Caco-2 (cell line): ENCODE measurements at regions of chr1 and their contacts with region 1.

Region 1: DNA sequence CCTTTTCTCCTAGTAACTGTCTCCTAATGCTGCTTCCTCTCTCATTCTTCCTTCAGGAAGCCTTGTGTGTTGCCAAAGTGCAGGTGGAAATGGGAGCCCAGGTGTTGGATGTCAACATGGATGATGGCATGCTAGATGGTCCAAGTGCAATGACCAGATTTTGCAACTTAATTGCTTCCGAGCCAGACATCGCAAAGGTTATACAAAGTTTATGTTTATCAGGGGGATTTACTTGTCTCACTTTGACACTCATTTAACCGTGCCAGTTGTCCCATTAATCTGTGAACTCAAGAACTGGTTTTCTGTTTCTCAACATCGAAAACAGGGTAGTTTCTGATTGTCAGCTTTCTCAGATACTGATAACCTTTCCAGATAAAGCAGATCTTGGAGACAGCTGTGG is 40.4 kb downstream of the MTR start:
- DNase-seq: peak; percentile 48 to 62
- H3K4me3 ChIP-seq: no peak overlapping the region
- H3K4me3 Mint-ChIP-seq: no peak overlapping the region
- H3K27ac Mint-ChIP-seq: no peak overlapping the region
- H3K4me1 ChIP-seq: no peaks in the 10 kb centered on the region; the same call in none of the 2 replicates
- H3K4me1 Mint-ChIP-seq: no peaks in the 10 kb centered on the region
- H3K27me3 ChIP-seq: no peaks in the 10 kb centered on the region
- H3K27me3 Mint-ChIP-seq: no peaks in the 10 kb centered on the region
- CTCF ChIP-seq: no peak

Region 2: DNA sequence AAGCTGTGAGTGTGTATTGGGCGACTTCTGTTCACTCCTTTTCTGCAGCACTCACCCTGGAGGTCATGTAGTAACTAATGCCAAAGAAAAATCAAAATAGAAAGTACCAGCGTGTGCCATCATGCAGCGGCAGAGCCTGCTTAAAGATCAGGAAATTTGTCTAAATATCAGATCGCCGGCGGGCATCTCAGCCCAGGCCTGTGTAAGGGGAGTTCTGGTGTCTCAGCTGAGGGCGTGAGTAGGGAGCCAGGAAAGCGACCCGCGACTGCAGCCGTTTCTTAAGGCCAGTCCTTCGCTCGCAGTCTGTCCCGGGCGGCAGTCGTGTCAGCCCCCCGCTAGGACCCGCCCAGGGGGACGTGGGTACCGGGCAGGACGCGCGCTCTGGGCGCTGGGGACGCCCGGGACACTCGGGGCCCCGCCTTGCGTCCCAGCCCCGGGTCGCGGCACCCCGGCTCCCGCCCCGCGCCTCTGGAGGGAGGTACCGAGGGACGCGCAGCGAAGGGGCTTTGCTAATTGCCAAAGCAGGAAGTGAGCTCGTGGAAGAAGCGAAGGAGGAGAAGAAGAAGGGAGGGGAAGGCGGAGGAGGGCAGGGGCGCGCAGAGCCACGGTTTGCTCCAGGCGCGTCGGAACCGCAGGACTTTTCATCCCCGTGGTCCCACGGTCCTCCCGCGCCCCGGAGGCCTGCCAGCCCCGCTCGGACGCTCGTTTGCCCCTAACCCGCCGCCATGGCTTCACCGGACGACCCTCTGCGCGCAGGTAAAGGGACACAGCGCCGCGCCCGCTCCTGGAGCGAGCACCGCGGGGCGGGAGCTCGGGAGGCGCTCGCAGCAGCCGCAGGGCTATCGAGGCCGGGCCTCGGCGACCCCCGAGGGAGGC is 440.3 kb before region 1 on chr1:
- CTCF ChIA-PET with region 1: no interaction called
- POLR2A ChIA-PET with region 1: no interaction called
- intact Hi-C with region 1: no loop called
- DNase-seq: peak; percentile 55 to 65
- H3K4me3 ChIP-seq: peak overlapping the region; percentile 82
- H3K4me3 Mint-ChIP-seq: peak overlapping the region; percentile 85
- H3K27ac Mint-ChIP-seq: peak overlapping the region; percentile 74
- H3K4me1 ChIP-seq: peaks cover 30% of the 10 kb centered on the region
- H3K4me1 Mint-ChIP-seq: peaks cover 23% of the 10 kb centered on the region
- H3K27me3 ChIP-seq: no peaks in the 10 kb centered on the region
- H3K27me3 Mint-ChIP-seq: no peaks in the 10 kb centered on the region
- CTCF ChIP-seq: no peak

Region 3: GRCh38 chr1:236795035-236795756 is 40.3 kb before region 1 on chr1 and contains the start of gene MTR:
- CTCF ChIA-PET with region 1: no interaction called
- POLR2A ChIA-PET with region 1: no interaction called
- intact Hi-C with region 1: loop called (anchors 1 kb)
- DNase-seq: peak; percentile 97 to 98
- H3K4me3 ChIP-seq: peak within 1 kb of the TSS; percentile 95
- H3K4me3 Mint-ChIP-seq: peak within 1 kb of the TSS; percentile 97
- H3K27ac Mint-ChIP-seq: peak within 1 kb of the TSS; percentile 97
- H3K4me1 ChIP-seq: no peaks in the 10 kb centered on the region
- H3K4me1 Mint-ChIP-seq: peaks cover 5% of the 10 kb centered on the region
- H3K27me3 ChIP-seq: no peaks in the 10 kb centered on the region
- H3K27me3 Mint-ChIP-seq: no peaks in the 10 kb centered on the region
- CTCF ChIP-seq: no peak
- total RNA-seq, gene MTR: 22.9 and 26.3 TPM in 2 replicates

Region 4: DNA sequence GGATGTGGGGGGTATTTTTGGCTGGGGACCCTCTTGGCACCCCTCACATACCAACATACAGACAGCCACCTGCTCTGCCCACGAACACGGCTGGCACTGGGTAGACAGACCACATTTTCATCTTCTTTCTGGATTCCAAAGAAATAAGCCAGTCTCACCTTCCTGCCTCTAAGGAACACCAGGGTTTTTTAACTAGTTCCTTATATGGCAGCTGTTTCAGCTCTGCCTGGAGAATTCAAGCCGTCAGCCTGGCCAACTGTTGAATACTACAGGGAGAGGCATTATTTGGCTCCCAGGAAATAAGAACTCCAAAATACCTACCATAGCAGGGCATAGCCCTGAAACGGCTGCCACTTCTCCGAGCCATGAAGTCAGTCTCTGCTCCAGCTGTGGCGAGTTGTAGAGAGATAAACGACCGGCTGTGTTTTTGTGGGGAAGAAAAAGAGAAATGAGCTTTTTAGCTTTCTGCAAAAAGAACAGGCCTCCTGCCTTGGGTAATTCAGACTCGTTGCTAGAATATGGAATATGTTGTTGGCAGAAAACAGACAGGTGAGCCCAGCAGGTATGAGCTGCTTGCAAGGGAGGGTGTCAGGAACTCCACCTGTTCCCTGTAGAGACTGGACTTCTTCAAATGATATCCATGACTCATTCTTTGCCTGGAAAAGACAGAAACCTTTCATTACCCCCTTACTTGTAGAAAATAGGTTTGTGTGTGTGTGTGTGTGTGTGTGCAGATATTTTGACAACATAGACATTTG is 116.9 kb after region 1 on chr1:
- CTCF ChIA-PET with region 1: no interaction called
- POLR2A ChIA-PET with region 1: no interaction called
- intact Hi-C with region 1: no loop called
- DNase-seq: no peak
- H3K4me3 ChIP-seq: no peak overlapping the region
- H3K4me3 Mint-ChIP-seq: no peak overlapping the region
- H3K27ac Mint-ChIP-seq: no peak overlapping the region
- H3K4me1 ChIP-seq: no peaks in the 10 kb centered on the region
- H3K4me1 Mint-ChIP-seq: no peaks in the 10 kb centered on the region
- H3K27me3 ChIP-seq: no peaks in the 10 kb centered on the region
- H3K27me3 Mint-ChIP-seq: peaks cover 15% of the 10 kb centered on the region
- CTCF ChIP-seq: no peak